Mammary epithelial cell (primary cell): ENCODE measurements at regions of chr18 and their contacts with region 1.

Region 1: GRCh38 chr18:23340656-23341055 is 112.4 kb upstream of the RIOK3 start:
- DNase-seq: no peak
- H3K4me3 ChIP-seq: no peak overlapping the region
- H3K27ac ChIP-seq: no peak overlapping the region
- H3K4me1 ChIP-seq: no peaks in the 10 kb centered on the region
- H3K27me3 ChIP-seq: no peaks in the 10 kb centered on the region
- CTCF ChIP-seq: no peak

Region 2: DNA sequence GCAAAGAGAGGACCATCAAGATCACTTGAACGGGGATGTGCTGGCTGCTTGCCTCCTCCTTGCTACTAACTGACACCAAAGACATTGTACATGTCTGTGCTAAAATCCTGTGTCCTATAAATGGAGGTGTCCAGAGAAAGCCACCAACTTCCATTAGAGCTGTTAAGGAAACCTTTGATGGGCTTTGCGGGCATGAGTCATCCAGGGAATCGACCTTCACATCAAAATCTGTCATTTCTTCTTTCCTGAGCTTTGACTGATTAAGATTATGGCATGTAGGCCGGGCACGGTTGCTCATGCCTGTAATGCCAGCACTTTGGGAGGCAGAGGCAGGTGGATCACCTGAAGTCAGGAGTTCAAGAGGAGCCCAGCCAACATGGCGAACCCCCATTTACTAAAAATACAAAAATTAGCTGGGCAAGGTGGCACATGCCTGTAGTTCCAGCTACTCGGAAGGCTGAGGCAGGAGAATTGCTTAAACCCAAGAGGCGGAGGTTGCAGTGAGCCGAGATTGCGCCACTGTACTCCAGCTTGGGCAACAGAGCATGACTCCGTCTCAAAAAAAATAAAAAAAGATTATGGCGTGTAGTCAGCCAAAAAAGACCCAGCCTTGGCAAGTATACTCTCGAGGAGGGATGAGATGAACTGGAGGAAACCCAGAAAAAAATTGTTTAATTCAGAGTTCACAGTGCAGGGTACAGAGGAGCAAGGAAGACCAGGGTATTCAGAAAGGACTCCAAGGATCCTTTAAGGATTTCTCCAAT is 89.6 kb before region 1 on chr18:
- CTCF ChIA-PET with region 1: no interaction called
- dilution Hi-C with region 1: loop called (anchors 5 kb)
- in situ Hi-C with region 1: no loop called
- intact Hi-C with region 1: no loop called
- DNase-seq: no peak
- H3K4me3 ChIP-seq: no peak overlapping the region
- H3K27ac ChIP-seq: no peak overlapping the region
- H3K4me1 ChIP-seq: no peaks in the 10 kb centered on the region
- H3K27me3 ChIP-seq: no peaks in the 10 kb centered on the region
- CTCF ChIP-seq: no peak

Region 3: GRCh38 chr18:23291456-23292205 is 49.0 kb before region 1 on chr18:
- CTCF ChIA-PET with region 1: no interaction called
- dilution Hi-C with region 1: loop called (anchors 5 kb)
- in situ Hi-C with region 1: no loop called
- intact Hi-C with region 1: no loop called
- DNase-seq: peak; percentile 70
- H3K4me3 ChIP-seq: no peak overlapping the region
- H3K27ac ChIP-seq: no peak overlapping the region
- H3K4me1 ChIP-seq: peaks cover 24% of the 10 kb centered on the region
- H3K27me3 ChIP-seq: no peaks in the 10 kb centered on the region
- CTCF ChIP-seq: no peak